ENCODE measurements at regions of chr1 and their contacts with region 1.

Region 1: DNA sequence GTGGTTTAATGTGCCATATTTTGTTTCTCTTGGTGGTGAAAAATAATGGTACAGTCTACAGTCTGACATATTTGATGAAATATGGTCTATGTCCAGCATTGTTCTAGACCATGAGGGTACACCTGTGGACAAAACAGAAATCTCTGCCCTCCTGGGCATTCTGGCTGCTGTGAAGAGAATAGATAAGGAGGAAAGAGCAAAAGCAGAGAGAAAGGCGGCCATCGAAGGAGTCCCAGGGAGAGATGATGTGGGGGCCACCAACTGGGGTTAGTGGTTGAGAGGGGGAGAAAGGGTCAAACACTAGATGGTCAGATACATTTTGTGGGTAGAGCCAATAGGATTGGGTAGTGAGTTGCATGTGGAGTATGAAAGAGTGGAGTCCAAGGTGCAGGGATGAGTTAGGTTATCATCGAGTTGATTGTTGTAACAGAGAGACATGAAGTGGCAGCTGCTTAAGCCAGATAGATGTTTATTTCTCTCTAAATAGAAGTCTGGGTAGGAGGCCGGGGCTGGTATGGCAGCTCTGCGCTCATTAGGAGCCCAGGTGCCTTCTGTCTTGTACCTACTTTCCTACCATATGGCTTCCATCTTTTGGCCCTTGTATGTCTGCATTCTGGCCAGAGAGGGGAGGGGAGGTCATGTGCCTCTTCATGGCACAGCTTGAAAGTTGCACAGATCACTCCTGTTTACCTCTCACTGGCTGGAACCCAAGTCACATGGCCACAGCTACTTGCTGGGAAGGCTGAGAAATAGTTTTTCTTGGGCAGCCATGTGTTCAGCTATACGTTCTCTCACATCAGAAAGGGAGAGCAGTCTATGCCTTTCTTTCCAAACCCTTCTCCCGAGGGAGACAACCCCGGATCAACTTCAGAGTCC is 13.0 kb downstream of the UBE4B start:
- DNase-seq: no peak
- ATAC-seq: no peak
- H3K4me3 ChIP-seq: no peak overlapping the region
- H3K4me3 Mint-ChIP-seq: no peak overlapping the region
- H3K27ac ChIP-seq: no peak overlapping the region
- H3K27ac Mint-ChIP-seq: no peak overlapping the region
- H3K4me1 ChIP-seq: peaks cover 0 to 3% of the 10 kb centered on the region in 2 experiments
- H3K4me1 Mint-ChIP-seq: peaks cover 37 to 52% (median 40%) of the 10 kb centered on the region in 3 donors
- H3K27me3 ChIP-seq: no peaks in the 10 kb centered on the region
- H3K27me3 Mint-ChIP-seq: no peaks in the 10 kb centered on the region

Region 2: DNA sequence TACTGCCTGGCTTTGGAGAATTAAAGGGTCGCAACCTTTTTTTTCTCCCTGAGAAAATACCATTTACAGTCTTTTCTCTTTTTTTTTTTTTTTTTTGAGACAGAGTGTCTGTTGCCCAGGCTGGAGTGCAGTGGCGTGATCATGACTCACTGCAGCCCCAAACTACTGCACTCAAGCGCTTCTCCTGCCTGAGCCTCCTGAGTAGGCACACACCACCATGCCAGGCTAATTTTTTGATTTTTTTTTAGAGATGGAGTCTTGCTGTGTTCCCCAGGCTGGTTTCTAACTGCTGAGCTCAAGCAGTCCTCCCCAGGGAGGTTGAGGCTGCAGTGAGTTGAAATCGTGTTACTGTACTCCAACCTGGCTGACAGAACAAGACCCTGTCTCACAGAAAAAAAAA is 11.6 kb after region 1 on chr1:
- CTCF ChIA-PET with region 1: interaction called in 1 of 2 experiments, 10 read pairs
- POLR2A ChIA-PET with region 1: no interaction called
- DNase-seq: no peak
- ATAC-seq: no peak
- H3K4me3 ChIP-seq: no peak overlapping the region
- H3K4me3 Mint-ChIP-seq: no peak overlapping the region
- H3K27ac ChIP-seq: no peak overlapping the region
- H3K27ac Mint-ChIP-seq: no peak overlapping the region
- H3K4me1 ChIP-seq: no peaks in the 10 kb centered on the region
- H3K4me1 Mint-ChIP-seq: peaks cover 8 to 14% (median 13%) of the 10 kb centered on the region in 3 donors
- H3K27me3 ChIP-seq: no peaks in the 10 kb centered on the region
- H3K27me3 Mint-ChIP-seq: no peaks in the 10 kb centered on the region

Measured in T-cell (primary cell).